ENCODE measurements at regions of chr7 and their contacts with region 1.

Region 1: GRCh38 chr7:30366606-30367005 is 82.2 kb downstream of the ZNRF2 start:
- DNase-seq: no peak
- ATAC-seq: no peak
- H3K4me3 ChIP-seq: no peak overlapping the region
- H3K4me3 Mint-ChIP-seq: no peak overlapping the region
- H3K27ac ChIP-seq: no peak overlapping the region
- H3K27ac Mint-ChIP-seq: no peak overlapping the region
- H3K4me1 ChIP-seq: no peaks in the 10 kb centered on the region
- H3K4me1 Mint-ChIP-seq: no peaks in the 10 kb centered on the region
- H3K27me3 ChIP-seq: no peaks in the 10 kb centered on the region
- H3K27me3 Mint-ChIP-seq: no peaks in the 10 kb centered on the region
- CTCF ChIP-seq: no peak

Region 2: DNA sequence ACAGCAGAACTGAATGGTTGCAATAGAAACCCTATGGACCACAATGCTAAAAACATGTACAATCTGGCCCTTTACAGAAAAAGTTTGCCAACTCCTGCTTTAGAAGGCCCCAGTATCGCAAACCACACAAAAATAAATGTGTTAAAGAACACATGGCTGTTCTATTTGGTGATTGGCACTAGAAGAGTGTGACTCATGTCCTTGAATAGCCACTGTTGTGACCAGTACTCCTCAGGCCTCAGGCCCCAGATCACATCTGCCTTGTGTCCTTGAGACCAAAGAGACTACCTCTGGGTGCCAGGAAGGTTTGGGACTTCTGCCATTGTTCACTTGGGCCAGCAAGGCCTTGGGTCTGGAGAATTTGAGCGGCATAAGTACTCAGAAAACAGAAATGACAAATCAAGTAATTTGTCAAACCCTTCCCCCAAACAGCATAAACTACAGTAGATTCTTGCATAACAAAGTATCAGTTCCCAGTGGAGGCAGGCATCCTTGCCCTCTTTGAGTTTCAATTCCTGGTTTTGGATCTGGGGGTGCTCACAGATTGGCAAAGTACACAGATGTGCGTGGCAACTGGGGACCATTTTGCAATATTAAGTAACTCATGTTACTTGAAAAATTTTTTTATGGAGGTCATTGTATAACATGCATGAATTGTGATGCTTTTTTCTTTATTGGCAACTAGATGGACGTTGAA is 181.7 kb before region 1 on chr7:
- CTCF ChIA-PET with region 1: no interaction called
- POLR2A ChIA-PET with region 1: no interaction called
- intact Hi-C with region 1: no loop called
- DNase-seq: peak in 3 of 14 experiments; percentile 21 to 70 (median 58)
- ATAC-seq: no peak
- H3K4me3 ChIP-seq: no peak overlapping the region
- H3K4me3 Mint-ChIP-seq: no peak overlapping the region
- H3K27ac ChIP-seq: no peak overlapping the region
- H3K27ac Mint-ChIP-seq: no peak overlapping the region
- H3K4me1 ChIP-seq: no peaks in the 10 kb centered on the region
- H3K4me1 Mint-ChIP-seq: no peaks in the 10 kb centered on the region
- H3K27me3 ChIP-seq: no peaks in the 10 kb centered on the region
- H3K27me3 Mint-ChIP-seq: no peaks in the 10 kb centered on the region
- CTCF ChIP-seq: no peak

Region 3: DNA sequence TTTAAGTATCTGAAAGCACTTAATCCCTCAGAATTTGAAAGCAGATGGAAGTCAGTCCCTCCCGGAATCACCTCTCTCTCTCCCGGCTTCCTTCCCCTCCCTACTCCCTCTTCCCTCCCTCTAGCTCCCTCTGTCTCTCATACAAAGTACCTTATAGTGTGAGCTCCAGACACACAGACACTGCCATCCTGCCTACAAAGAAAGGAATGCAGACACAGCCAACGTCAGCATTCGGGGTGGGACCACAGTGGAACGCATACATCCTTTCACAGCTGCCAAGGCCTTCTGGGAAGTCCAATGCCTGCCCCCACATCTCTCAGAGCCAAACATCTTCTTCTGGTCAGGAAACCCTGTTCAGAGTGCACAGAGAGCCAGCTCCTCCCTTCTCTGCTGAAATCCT is 102.7 kb after region 1 on chr7:
- CTCF ChIA-PET with region 1: no interaction called
- POLR2A ChIA-PET with region 1: no interaction called
- intact Hi-C with region 1: loop called in 1 of 2 experiments (anchors 5 kb)
- DNase-seq: no peak
- ATAC-seq: no peak
- H3K4me3 ChIP-seq: no peak overlapping the region
- H3K4me3 Mint-ChIP-seq: no peak overlapping the region
- H3K27ac ChIP-seq: no peak overlapping the region
- H3K27ac Mint-ChIP-seq: no peak overlapping the region
- H3K4me1 ChIP-seq: peaks cover 49% of the 10 kb centered on the region
- H3K4me1 Mint-ChIP-seq: peaks cover 82% of the 10 kb centered on the region
- H3K27me3 ChIP-seq: no peaks in the 10 kb centered on the region
- H3K27me3 Mint-ChIP-seq: no peaks in the 10 kb centered on the region
- CTCF ChIP-seq: no peak

Region 4: DNA sequence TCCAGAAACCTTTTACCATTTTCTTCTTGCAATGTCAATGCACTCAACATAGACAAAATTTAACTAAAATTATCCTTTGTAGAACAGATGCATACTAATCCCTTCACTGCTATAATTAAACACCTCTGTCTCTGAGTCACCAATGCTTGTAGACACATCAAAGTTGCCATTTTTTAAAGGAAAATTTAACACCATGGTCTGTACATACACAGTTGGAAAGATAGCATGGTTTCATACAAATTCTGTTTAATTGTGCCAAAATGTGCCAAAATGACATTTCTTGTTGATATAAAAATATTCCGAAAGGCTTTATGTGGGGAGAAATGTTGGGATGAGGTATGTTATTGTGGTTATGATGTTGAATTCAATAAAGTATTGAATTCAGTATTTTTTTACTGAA is 848.1 kb after region 1 on chr7:
- CTCF ChIA-PET with region 1: no interaction called
- POLR2A ChIA-PET with region 1: no interaction called
- intact Hi-C with region 1: no loop called
- DNase-seq: no peak
- ATAC-seq: no peak
- H3K4me3 ChIP-seq: no peak overlapping the region
- H3K4me3 Mint-ChIP-seq: no peak overlapping the region
- H3K27ac ChIP-seq: no peak overlapping the region
- H3K27ac Mint-ChIP-seq: no peak overlapping the region
- H3K4me1 ChIP-seq: no peaks in the 10 kb centered on the region
- H3K4me1 Mint-ChIP-seq: no peaks in the 10 kb centered on the region
- H3K27me3 ChIP-seq: no peaks in the 10 kb centered on the region
- H3K27me3 Mint-ChIP-seq: no peaks in the 10 kb centered on the region
- CTCF ChIP-seq: no peak

Measured in CD4-positive, alpha-beta T cell (primary cell).